ENCODE measurements at regions of chr11 and their contacts with region 1.

Region 1: DNA sequence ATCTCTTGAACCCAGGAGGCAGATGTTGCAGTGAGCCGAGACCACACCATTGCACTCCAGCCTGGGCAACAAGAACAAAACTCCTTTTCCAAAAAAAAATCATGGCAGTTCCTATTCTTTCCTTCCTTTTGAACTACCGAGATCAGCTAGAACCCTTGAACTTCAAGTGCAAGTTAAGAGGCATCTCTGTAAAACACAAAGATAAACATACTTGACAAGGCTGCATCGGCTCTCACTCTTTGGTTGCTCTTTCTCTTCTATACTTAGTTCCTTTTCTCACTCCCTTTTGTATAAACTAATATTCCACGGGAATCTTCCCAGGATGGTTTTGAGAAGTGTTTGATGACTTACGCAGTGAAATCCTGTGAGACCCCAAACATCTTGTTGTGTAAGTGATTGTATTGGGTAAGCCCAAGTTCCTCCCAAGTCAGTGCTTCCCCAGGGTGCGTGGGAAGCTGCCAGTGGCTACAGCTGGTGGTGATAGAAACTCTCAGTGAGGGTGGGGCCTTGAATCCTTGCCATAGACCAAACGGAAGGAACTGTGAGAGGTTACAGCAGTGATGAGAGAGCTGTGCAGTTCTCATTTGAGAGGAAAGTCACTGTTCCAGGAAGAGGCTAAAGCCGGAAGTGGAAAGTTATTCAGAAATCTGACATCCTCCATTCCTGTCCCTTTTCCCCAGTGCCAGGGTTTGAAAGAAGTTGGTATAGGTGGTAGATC is 24.1 kb upstream of the CDC42EP2 start:
- DNase-seq: peak; percentile 32 to 52
- H3K4me3 ChIP-seq: no peak overlapping the region
- H3K27ac ChIP-seq: peak overlapping the region; percentile 92
- H3K4me1 ChIP-seq: peaks cover 34% of the 10 kb centered on the region
- H3K27me3 ChIP-seq: no peaks in the 10 kb centered on the region
- CTCF ChIP-seq: no peak

Region 2: GRCh38 chr11:64240394-64241174 is 1050.0 kb before region 1 on chr11 and contains the start of gene FKBP2:
- CTCF ChIA-PET with region 1: no interaction called
- POLR2A ChIA-PET with region 1: interaction called, 17 read pairs
- intact Hi-C with region 1: no loop called
- DNase-seq: peak; percentile 97 to 98
- H3K4me3 ChIP-seq: peak within 1 kb of the TSS; percentile 90
- H3K27ac ChIP-seq: peak within 1 kb of the TSS; percentile 97
- H3K4me1 ChIP-seq: peaks cover 46% of the 10 kb centered on the region
- H3K27me3 ChIP-seq: no peaks in the 10 kb centered on the region
- CTCF ChIP-seq: no peak
- total RNA-seq, gene FKBP2: 84.2 and 93.2 TPM in 2 replicates

Region 3: GRCh38 chr11:65366340-65366773 is 75.8 kb after region 1 on chr11:
- CTCF ChIA-PET with region 1: no interaction called
- POLR2A ChIA-PET with region 1: interaction called, 11 read pairs
- intact Hi-C with region 1: no loop called
- DNase-seq: peak; percentile 55 to 71
- H3K4me3 ChIP-seq: no peak overlapping the region
- H3K27ac ChIP-seq: no peak overlapping the region
- H3K4me1 ChIP-seq: peaks cover 9% of the 10 kb centered on the region
- H3K27me3 ChIP-seq: no peaks in the 10 kb centered on the region
- CTCF ChIP-seq: peak; percentile 92